HEK293 (cell line): ENCODE measurements at regions of chr1 and their contacts with region 1.

Region 1: GRCh38 chr1:999725-1000356 is at the start of gene HES4:
- H3K4me3 ChIP-seq: peak within 1 kb of the TSS; percentile 74
- H3K27ac ChIP-seq: peak within 1 kb of the TSS; percentile 97
- H3K4me1 ChIP-seq: 0 out of 2 replicates have a peak, but pooled peaks cover 3% of the 10 kb centered on the region
- CTCF ChIP-seq: no peak

Region 2: GRCh38 chr1:983799-984473 is 15.9 kb before region 1 on chr1:
- CTCF ChIA-PET with region 1: interaction called, 39 read pairs
- POLR2A ChIA-PET with region 1: interaction called, 11 read pairs
- H3K4me3 ChIP-seq: no peak overlapping the region
- H3K27ac ChIP-seq: no peak overlapping the region
- H3K4me1 ChIP-seq: no peaks in the 10 kb centered on the region
- CTCF ChIP-seq: peak; percentile 54

Region 3: GRCh38 chr1:1013105-1013921 is 13.5 kb after region 1 on chr1 and contains the start of gene ISG15:
- CTCF ChIA-PET with region 1: interaction called, 31 read pairs
- POLR2A ChIA-PET with region 1: interaction called, 44 read pairs
- H3K4me3 ChIP-seq: peak within 1 kb of the TSS; percentile 32
- H3K27ac ChIP-seq: no peak within 1 kb of the TSS
- H3K4me1 ChIP-seq: no peaks in the 10 kb centered on the region
- CTCF ChIP-seq: no peak

Region 4: DNA sequence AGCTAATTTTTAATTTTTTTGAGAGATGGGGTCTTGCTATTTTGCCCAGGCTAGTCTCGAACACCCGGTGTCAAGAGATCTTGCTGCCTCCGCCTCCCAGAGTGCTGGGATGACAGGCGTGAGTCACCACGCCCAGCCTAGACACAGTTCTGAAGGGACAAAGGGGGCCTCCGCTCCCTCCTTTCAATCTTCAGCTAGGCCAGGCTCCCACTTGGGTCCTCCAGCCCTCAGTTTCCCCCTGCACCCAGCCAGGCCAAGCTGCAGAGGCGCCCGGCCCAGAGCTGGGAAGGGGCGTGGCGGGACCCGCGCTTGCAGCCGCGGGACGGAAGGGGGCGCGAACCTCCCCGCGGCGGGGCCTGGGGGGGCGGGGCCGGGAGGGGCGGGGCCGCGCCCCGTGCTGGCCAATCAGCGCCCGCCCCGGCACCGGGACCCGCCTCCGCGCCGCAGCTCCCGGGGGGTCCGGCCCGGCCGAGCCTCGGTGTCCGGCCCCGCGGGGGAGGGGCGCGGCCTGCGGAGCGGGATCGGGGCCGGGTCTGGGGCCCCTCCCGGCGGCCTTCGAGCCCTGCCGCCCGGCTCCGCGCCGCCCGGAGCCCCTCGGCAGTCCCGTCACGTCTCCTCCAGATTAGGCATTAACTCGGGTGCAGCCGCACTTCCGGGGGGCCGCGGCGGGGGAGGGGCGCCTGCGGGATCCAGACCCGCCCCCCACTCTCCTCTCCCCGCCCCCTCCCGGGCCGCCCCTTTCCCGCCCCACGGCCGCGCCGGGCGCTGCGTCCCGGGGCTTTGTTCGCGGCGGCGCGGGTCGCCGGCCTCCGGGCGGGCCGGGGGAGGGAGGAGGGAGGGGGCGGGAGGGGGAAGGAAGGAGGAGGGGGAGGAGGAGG is 19.5 kb after region 1 on chr1:
- CTCF ChIA-PET with region 1: interaction called, 31 read pairs
- POLR2A ChIA-PET with region 1: interaction called, 44 read pairs
- H3K4me3 ChIP-seq: peak overlapping the region; percentile 45
- H3K27ac ChIP-seq: peak overlapping the region; percentile 64; the same call in 1 of the 2 replicates
- H3K4me1 ChIP-seq: peaks cover 3% of the 10 kb centered on the region; the same call in 1 of the 2 replicates
- CTCF ChIP-seq: peak; percentile 68

Region 5: GRCh38 chr1:1059494-1060280 is 59.8 kb after region 1 on chr1:
- CTCF ChIA-PET with region 1: interaction called, 11 read pairs
- POLR2A ChIA-PET with region 1: interaction called, 3 read pairs
- H3K4me3 ChIP-seq: peak overlapping the region; percentile 45
- H3K27ac ChIP-seq: no peak overlapping the region; the same call in 1 of the 2 replicates
- H3K4me1 ChIP-seq: 0 out of 2 replicates have a peak, but pooled peaks cover 5% of the 10 kb centered on the region
- CTCF ChIP-seq: no peak

Region 6: GRCh38 chr1:1109743-1110142 is 109.9 kb after region 1 on chr1:
- CTCF ChIA-PET with region 1: no interaction called
- POLR2A ChIA-PET with region 1: no interaction called
- H3K4me3 ChIP-seq: no peak overlapping the region
- H3K27ac ChIP-seq: no peak overlapping the region
- H3K4me1 ChIP-seq: no peaks in the 10 kb centered on the region
- CTCF ChIP-seq: no peak